Thyroid gland (tissue), 4 donors: ENCODE measurements at regions of chr1 and their contacts with region 1.

Region 1: GRCh38 chr1:117146570-117147346 is 25.2 kb upstream of the TRIM45 start:
- DNase-seq: peak; percentile 40 to 42
- H3K4me3 ChIP-seq: no peak overlapping the region
- H3K27ac ChIP-seq: peak overlapping the region in 1 of 3 donors; percentile 64
- H3K4me1 ChIP-seq: peaks cover 5 to 12% of the 10 kb centered on the region in 2 donors
- H3K27me3 ChIP-seq: no peaks in the 10 kb centered on the region
- CTCF ChIP-seq: no peak
- POLR2A ChIP-seq: no peak

Region 2: GRCh38 chr1:117271571-117272358 is 125.0 kb after region 1 on chr1:
- intact Hi-C with region 1: loop called (anchors 10 kb)
- DNase-seq: no peak
- H3K4me3 ChIP-seq: no peak overlapping the region
- H3K27ac ChIP-seq: no peak overlapping the region
- H3K4me1 ChIP-seq: peaks cover 20 to 36% of the 10 kb centered on the region in 2 donors
- H3K27me3 ChIP-seq: no peaks in the 10 kb centered on the region
- CTCF ChIP-seq: no peak
- POLR2A ChIP-seq: no peak